A549 (cell line): ENCODE measurements at regions of chr20 and their contacts with region 1.

Region 1: DNA sequence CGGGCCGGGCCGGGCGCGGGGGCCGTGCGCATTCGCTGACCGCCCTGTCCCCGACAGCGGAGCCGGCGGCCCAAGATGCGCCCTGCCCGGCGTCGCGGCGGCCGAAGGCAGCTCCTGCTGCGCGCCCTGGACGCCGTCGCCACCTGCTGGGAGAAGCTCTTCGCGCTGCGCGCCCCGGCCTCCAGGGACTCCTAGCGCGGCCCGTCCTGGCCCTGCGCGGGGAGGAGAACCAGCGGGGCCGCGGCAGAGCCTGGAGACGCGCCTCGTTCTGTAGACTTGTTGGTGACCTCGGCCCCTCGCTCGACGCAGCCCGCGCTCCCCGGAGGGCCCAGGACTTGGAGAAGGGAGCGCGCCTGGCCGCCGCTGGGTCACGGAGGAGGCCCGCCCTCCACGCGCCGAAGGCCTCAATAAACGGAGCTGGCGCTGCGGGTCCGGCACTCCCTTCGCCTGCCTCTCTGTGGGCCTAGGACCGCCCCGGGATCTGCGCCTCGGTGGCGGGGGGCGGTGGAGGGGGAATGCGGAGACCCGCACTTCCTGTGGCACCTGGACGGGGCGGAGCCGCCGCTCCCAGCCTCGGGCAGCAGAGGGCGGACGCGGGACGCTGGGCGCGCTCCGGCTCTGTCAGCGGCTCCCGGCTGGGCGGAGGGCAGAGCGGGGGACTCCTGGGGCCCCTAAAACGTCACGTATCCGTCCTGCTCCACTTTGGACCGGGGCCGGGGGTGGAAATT is 2.7 kb downstream of the C20orf204 start:
- DNase-seq: peak; percentile 85 to 91
- ATAC-seq: peak; percentile 76 to 88
- H3K4me3 ChIP-seq: peak overlapping the region; percentile 48
- H3K27ac ChIP-seq: peak overlapping the region; percentile 75 to 92
- H3K4me1 ChIP-seq: peaks cover 13% of the 10 kb centered on the region; the same call in 2 of the 3 replicates
- CTCF ChIP-seq: peak; percentile 56
- EP300 ChIP-seq: no peak
- POLR2A ChIP-seq: peak; percentile 19; the same call in 1 of the 2 replicates
- RAD21 ChIP-seq: peak; percentile 52 to 68; a peak in 4 of 5 replicates

Region 2: DNA sequence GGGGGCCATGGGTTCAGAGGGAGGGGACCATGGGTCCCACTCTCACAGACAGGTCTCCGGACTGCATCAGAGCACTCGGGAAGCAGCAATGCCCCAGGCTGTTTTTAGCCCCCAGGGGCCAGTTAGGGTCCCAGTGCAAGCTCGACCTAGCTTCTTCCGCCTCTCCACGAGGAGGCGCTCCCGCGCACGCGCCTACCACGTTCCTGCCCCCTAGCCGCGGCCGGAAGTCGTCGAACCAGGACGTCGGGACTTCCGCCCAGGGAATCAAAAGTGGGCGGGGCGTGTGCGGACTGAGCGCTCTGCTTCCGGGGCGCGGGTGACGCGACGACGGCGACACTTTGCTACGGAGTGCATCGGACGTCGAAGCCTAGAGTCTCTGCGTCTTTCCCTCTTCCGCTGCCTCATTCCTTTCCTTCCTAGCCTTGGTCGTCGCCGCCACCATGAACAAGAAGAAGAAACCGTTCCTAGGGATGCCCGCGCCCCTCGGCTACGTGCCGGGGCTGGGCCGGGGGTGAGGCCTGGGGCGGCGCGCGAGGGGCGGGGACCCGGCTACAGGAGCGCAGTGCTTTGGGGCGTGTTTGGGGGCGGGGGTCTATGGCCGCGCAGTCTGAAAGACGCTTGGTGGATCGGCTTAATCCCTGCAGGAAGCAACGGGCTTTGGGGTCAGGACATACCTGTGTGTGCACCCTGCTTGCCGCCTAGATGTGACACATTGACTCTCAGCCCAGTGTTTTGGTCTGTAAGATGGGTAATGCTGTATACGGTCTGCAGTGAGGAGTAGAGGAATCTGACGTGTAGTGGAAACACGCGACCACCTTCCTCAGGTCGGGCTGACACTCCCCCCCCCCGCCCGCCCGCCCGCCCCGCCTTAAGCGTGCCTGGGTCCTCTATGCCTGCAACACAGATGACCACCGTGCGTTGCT is 57.7 kb before region 1 on chr20 and contains the start of gene PRPF6:
- CTCF ChIA-PET with region 1: interaction called, 28 read pairs
- POLR2A ChIA-PET with region 1: interaction called, 17 read pairs
- DNase-seq: peak; percentile 92 to 97
- ATAC-seq: peak; percentile 84 to 87
- H3K4me3 ChIP-seq: peak within 1 kb of the TSS; percentile 93
- H3K27ac ChIP-seq: peak within 1 kb of the TSS; percentile 94 to 95
- H3K4me1 ChIP-seq: peaks cover 34% of the 10 kb centered on the region
- CTCF ChIP-seq: peak; percentile 86
- EP300 ChIP-seq: no peak
- POLR2A ChIP-seq: peak; percentile 68
- RAD21 ChIP-seq: peak; percentile 30 to 51; a peak in 4 of 5 replicates
- polyA plus RNA-seq, gene PRPF6: 42.8 and 47.5 TPM in 2 replicates

Region 3: GRCh38 chr20:64006902-64007301 is 31.8 kb before region 1 on chr20:
- CTCF ChIA-PET with region 1: interaction called, 22 read pairs
- POLR2A ChIA-PET with region 1: no interaction called
- DNase-seq: no peak
- ATAC-seq: no peak
- H3K4me3 ChIP-seq: no peak overlapping the region
- H3K27ac ChIP-seq: no peak overlapping the region
- H3K4me1 ChIP-seq: no peaks in the 10 kb centered on the region
- CTCF ChIP-seq: no peak
- EP300 ChIP-seq: no peak
- POLR2A ChIP-seq: no peak
- RAD21 ChIP-seq: no peak

Region 4: GRCh38 chr20:64053841-64054661 is 15.3 kb after region 1 on chr20:
- CTCF ChIA-PET with region 1: interaction called, 143 read pairs
- POLR2A ChIA-PET with region 1: interaction called, 3 read pairs
- DNase-seq: peak; percentile 52 to 68
- ATAC-seq: peak; percentile 30 to 57; a peak in 5 of 6 replicates
- H3K4me3 ChIP-seq: no peak overlapping the region
- H3K27ac ChIP-seq: peak overlapping the region in 1 of 2 experiments; percentile 55; a peak in 3 of 6 replicates
- H3K4me1 ChIP-seq: peaks cover 55% of the 10 kb centered on the region
- CTCF ChIP-seq: peak; percentile 19; the same call in 2 of the 3 replicates
- EP300 ChIP-seq: no peak
- POLR2A ChIP-seq: no peak
- RAD21 ChIP-seq: peak in 1 of 2 experiments; percentile 51; a peak in 2 of 5 replicates

Region 5: DNA sequence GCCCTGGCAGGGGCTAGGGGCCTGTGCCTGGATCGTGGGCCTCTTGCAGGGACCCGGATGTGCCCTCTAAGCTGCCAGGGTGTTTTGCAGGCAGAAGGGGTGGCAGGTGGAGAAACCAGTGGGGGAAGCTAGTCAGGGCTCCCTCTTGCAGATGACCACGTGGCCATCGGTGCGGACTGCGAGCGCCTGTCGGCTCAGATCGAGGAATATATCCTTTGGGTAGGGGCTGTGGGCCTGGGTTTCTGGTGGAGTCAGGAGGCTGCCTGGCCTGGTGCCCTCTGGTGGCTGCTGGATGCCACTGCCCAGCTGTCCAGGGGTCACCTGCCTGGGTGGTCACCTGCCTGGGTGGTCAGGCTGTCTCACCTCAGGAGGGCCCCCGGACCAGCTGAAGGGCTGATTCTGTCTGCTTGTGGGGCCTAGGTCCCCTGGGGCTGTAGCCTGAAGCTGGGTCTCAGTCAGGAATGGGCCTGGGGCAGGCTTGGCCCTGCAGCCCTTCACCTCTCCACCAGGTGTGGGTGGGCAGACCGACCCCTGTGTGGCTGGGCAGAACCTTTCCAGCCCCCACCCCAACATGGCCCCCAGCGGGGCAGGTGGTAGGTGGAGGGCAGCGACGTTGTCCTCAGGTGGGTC is 31.0 kb after region 1 on chr20:
- CTCF ChIA-PET with region 1: interaction called, 31 read pairs
- POLR2A ChIA-PET with region 1: interaction called, 3 read pairs
- DNase-seq: peak in 1 of 2 experiments; percentile 87
- ATAC-seq: peak; percentile 60 to 79
- H3K4me3 ChIP-seq: no peak overlapping the region
- H3K27ac ChIP-seq: no peak overlapping the region
- H3K4me1 ChIP-seq: peaks cover 25% of the 10 kb centered on the region
- CTCF ChIP-seq: peak; percentile 68
- EP300 ChIP-seq: no peak
- POLR2A ChIP-seq: no peak
- RAD21 ChIP-seq: peak; percentile 31 to 40; a peak in 2 of 5 replicates

Region 6: GRCh38 chr20:64101731-64102621 is 63.2 kb after region 1 on chr20:
- CTCF ChIA-PET with region 1: interaction called, 11 read pairs
- POLR2A ChIA-PET with region 1: no interaction called
- DNase-seq: peak; percentile 41 to 79
- ATAC-seq: peak; percentile 70 to 92
- H3K4me3 ChIP-seq: peak overlapping the region; percentile 71
- H3K27ac ChIP-seq: peak overlapping the region; percentile 81 to 91
- H3K4me1 ChIP-seq: 0 out of 3 replicates have a peak, but pooled peaks cover 6% of the 10 kb centered on the region
- CTCF ChIP-seq: peak; percentile 96
- EP300 ChIP-seq: no peak
- POLR2A ChIP-seq: no peak
- RAD21 ChIP-seq: peak; percentile 27 to 63